Activated CD4-positive, alpha-beta T cell treated with anti-CD3 and anti-CD28 coated beads for 36 hours (primary cell): ENCODE measurements at regions of chr20 and their contacts with region 1.

Region 1: DNA sequence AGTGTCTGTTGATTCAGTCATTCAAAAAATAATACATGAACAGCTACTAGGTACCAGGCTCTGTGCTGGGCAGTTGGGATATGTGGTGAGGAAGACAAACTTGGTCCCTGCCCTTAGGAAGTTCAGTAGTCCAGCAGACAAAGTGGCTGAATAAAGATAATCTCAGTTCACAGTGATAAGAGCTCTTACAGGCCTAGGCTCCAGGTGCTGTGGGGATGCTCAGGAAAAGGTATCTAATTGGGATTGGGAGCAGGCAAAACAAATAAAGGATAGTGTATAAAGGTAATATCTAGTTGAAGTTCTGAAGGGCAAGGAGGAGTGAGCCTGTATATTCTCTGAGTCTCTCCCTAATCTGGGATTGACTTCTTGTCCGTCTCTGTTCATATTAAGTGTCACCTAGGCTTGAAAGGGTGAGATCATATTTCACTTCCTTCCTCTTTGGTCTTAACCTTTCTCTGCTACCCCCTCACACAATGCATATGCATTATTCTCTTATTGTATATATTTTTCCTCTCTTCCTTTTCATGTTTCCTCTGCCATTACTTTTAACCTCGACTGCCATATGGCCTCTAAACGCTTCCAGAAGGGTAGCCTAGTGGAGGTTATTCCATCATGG is 13.5 kb downstream of the PTPN1 start:
- DNase-seq: no peak
- ATAC-seq: no peak
- H3K4me3 Mint-ChIP-seq: no peak overlapping the region
- H3K27ac Mint-ChIP-seq: peak overlapping the region; percentile 76
- H3K4me1 Mint-ChIP-seq: peaks cover 50% of the 10 kb centered on the region
- H3K27me3 Mint-ChIP-seq: no peaks in the 10 kb centered on the region

Region 2: GRCh38 chr20:50534567-50535551 is 11.2 kb after region 1 on chr20:
- CTCF ChIA-PET with region 1: interaction called, 7 read pairs
- POLR2A ChIA-PET with region 1: interaction called, 11 read pairs
- intact Hi-C with region 1: loop called in 1 of 2 experiments (anchors 2 kb)
- DNase-seq: no peak
- ATAC-seq: no peak
- H3K4me3 Mint-ChIP-seq: no peak overlapping the region
- H3K27ac Mint-ChIP-seq: peak overlapping the region; percentile 56
- H3K4me1 Mint-ChIP-seq: peaks cover 73% of the 10 kb centered on the region
- H3K27me3 Mint-ChIP-seq: no peaks in the 10 kb centered on the region